Cardiac septum (tissue), 1 donor: ENCODE measurements at regions of chr14 and their contacts with region 1.

Region 1: DNA sequence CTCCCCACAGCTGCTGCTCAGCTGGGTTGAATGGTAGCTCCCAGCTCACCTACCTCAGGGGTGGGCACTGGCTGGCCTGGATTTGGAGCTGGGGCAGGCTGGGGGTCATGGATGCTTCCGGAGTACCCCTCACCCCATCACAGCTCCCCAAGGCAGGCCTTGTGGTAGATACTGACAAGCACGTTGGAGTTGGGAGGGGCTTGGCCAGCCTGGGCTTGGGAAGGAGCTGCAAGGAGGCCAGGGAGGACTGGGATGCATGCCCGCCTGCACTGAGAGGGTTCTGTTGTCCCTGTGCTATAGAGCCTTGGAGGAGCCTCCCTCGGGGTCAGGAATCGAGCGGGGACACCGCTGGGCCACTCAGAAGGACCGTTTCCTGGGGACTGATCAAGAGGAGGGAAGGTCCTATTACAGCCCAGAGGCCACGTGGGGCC is 14.2 kb downstream of the TMEM63C start:
- DNase-seq: peak; percentile 73

Region 2: GRCh38 chr14:76793956-76794355 is 401.8 kb before region 1 on chr14:
- intact Hi-C with region 1: no loop called
- DNase-seq: no peak

Region 3: DNA sequence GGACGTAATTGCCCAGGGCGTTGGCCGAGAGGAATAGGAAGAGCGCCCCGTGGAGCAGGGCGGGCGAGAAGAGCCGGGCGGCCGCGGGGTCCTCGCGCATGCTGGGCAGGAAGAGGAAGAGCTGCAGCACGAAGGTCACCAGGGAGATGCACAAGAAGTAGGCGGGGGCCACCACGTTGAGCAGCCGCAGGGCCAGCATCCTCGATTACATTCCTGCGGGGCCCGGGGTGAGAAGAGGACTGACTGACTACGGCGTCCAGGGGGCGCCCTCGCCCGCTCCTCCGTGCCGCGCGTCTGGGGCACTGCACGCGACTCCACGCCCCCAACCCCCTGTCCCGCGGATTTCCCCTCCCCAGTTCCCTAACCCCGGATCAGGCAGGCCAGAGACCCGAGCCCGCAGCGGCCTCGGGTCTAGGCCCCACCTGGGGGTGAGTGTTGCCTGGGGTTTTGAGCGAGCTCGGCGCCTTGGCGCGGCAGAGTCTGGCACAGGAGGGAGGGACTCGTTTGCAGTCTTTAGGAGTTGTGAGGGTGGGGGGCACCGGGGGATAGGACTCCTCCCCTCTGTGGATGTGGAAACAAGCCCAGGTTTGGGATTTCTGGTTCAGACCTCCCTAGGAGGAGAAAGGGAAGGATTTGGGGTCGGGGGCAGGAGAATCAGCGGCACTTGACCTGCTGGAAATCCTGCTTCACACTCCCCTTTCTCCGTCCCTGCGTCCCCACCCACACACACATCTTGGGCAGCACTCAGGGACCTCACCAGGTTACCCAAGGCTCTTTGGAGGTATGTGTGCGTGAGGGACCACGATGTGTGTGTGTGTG is 56.0 kb before region 1 on chr14:
- intact Hi-C with region 1: loop called (anchors 5 kb)
- DNase-seq: no peak

Region 4: DNA sequence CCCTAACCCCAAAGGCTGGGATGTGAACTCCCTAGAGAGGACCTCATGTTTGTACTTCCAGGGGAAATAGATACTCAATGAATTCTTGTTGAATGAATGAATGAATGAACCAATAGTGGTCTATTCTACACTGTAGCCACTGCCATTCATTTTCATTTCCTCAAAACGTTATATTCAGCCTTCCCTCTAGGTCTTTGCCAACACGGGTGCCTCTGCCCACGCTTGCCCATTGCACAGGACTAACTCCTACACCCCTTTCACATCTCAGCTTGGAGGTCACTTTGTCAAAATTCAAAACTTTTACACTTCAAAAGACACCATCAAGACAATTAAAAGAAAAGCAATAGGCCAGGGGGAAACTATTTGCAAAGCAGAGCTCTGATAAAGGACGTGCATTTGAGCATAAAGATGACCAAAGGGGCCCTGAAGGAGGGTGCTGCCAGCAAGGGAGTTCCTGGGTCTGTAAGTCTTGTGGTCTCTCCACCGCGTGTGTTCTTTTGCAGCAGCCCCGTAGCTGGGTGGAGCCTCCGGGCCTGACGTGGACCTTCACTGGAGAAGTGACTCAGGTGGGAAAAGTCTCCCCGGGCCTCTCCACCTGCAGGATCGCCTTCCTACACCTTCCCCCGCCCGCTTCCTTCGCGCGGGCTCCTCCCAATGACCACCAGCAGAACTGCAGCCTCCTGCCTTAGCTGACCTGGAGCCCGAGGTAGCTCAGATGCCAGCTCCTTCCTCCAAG is 17.3 kb after region 1 on chr14:
- intact Hi-C with region 1: no loop called
- DNase-seq: no peak